ENCODE measurements at regions of chr14 and their contacts with region 1.

Region 1: GRCh38 chr14:50714450-50715073 is 46.5 kb upstream of the SAV1 start:
- DNase-seq: peak; percentile 60
- H3K4me3 ChIP-seq: no peak overlapping the region
- H3K27ac ChIP-seq: no peak overlapping the region
- H3K4me1 ChIP-seq: no peaks in the 10 kb centered on the region
- H3K27me3 ChIP-seq: no peaks in the 10 kb centered on the region
- CTCF ChIP-seq: peak; percentile 38 to 63
- POLR2A ChIP-seq: no peak

Region 2: DNA sequence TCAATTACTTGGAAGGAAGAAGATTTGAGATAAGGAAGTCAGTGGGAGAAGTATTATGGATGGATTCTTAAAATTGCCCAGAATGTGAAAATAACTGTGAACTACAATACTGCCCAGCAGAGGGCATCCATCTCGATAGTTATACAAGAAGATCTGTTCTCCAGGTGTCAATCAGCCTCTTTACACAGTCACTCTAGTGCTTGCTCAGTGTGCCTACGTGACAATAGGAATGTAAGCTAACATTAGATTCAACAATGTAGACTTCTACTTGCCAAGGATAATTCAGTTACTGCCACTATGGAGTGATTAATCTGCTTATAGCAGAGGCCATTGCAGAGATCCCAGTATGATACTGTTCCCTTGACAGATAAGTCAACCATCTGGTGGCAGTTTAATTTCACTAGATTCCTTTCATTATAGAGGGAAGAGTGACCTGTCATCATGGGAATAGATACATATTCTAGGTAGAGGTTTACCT is 171.6 kb before region 1 on chr14:
- CTCF ChIA-PET with region 1: interaction called, 14 read pairs
- POLR2A ChIA-PET with region 1: no interaction called
- dilution Hi-C with region 1: no loop called
- intact Hi-C with region 1: loop called (anchors 1 kb)
- DNase-seq: peak; percentile 68
- H3K4me3 ChIP-seq: no peak overlapping the region
- H3K27ac ChIP-seq: no peak overlapping the region
- H3K4me1 ChIP-seq: no peaks in the 10 kb centered on the region
- H3K27me3 ChIP-seq: peaks cover 0 to 11% of the 10 kb centered on the region in 2 experiments
- CTCF ChIP-seq: peak; percentile 24 to 47
- POLR2A ChIP-seq: no peak

Region 3: DNA sequence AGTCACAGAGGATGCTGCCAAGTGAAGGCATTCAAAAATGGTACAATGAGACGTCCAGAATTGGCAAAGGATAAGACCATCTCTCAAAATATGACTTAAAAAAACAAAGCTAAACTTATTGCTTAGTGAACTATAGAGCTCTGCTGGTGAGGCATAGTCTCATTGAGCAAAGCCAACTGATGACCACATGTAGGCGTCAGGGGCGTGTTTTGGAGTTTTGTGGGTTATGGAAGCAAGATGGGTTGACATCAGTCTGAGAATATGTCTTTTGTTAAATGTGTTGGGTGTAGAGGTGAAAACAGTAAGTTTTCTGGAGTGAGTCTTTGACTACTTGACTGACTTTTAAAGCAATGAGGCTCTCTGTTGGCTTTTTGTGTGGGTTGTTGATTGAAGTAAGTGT is 107.4 kb before region 1 on chr14:
- CTCF ChIA-PET with region 1: interaction called, 76 read pairs
- POLR2A ChIA-PET with region 1: no interaction called
- dilution Hi-C with region 1: no loop called
- intact Hi-C with region 1: no loop called
- DNase-seq: no peak
- H3K4me3 ChIP-seq: no peak overlapping the region
- H3K27ac ChIP-seq: no peak overlapping the region
- H3K4me1 ChIP-seq: peaks cover 16% of the 10 kb centered on the region
- H3K27me3 ChIP-seq: no peaks in the 10 kb centered on the region
- CTCF ChIP-seq: no peak
- POLR2A ChIP-seq: no peak

Region 4: DNA sequence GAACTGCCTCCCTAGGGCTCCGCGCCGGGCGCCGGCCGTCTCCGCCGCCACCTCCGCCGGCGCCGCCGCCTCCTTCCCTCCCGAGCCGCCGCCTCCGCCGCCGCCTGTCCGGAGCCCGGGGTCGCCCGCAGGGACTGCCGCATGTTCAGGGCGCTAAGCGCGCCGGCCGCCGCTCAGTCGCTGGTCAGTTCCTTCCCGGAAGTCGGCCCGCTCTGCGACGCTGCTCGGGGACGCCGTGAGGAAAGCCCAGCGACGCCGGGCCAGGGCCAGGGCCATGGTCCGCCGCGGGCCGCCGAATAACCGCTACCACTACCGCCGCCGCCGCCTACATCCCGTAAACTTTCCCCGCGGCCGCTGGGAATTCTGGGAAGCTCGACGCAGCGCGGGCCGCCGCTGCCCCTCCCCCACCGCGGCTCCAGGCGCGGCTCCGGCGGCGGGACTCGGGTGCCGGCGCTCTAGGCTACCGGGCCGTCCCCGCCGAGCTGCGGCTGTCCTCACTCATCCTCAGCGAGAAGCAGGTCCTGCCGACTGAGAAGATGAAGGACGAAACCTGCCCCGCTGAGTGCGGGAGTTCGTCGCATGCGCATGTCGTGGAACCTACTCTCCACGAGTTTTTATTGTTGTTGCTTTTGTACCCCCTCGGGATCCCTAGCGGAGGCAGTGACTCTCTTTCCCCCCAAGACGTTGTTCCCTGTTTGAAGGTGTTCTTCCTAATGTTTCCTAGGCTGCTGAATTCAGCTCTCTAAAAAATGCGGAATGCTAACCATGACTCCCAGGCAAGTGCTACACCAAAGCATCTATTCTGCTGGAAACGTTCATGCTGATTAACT is 46.4 kb before region 1 on chr14 and contains the start of gene SAV1:
- CTCF ChIA-PET with region 1: interaction called, 24 read pairs
- POLR2A ChIA-PET with region 1: interaction called, 4 read pairs
- dilution Hi-C with region 1: no loop called
- intact Hi-C with region 1: loop called (anchors 2 kb)
- DNase-seq: peak; percentile 82
- H3K4me3 ChIP-seq: peak within 1 kb of the TSS; percentile 70 to 85 (median 81)
- H3K27ac ChIP-seq: peak within 1 kb of the TSS; percentile 81
- H3K4me1 ChIP-seq: peaks cover 23% of the 10 kb centered on the region
- H3K27me3 ChIP-seq: no peaks in the 10 kb centered on the region
- CTCF ChIP-seq: no peak
- POLR2A ChIP-seq: peak; percentile 99
- total RNA-seq, gene SAV1: 27.8 and 31.0 TPM in 2 replicates

Region 5: GRCh38 chr14:50697659-50698290 is 16.8 kb before region 1 on chr14:
- CTCF ChIA-PET with region 1: interaction called, 13 read pairs
- POLR2A ChIA-PET with region 1: no interaction called
- dilution Hi-C with region 1: no loop called
- intact Hi-C with region 1: no loop called
- DNase-seq: no peak
- H3K4me3 ChIP-seq: no peak overlapping the region
- H3K27ac ChIP-seq: no peak overlapping the region
- H3K4me1 ChIP-seq: no peaks in the 10 kb centered on the region
- H3K27me3 ChIP-seq: peaks cover 2% of the 10 kb centered on the region in 2 experiments
- CTCF ChIP-seq: no peak
- POLR2A ChIP-seq: no peak

Region 6: GRCh38 chr14:50773632-50774541 is 59.3 kb after region 1 on chr14:
- CTCF ChIA-PET with region 1: interaction called, 15 read pairs
- POLR2A ChIA-PET with region 1: no interaction called
- dilution Hi-C with region 1: no loop called
- intact Hi-C with region 1: no loop called
- DNase-seq: peak; percentile 60
- H3K4me3 ChIP-seq: no peak overlapping the region
- H3K27ac ChIP-seq: peak overlapping the region; percentile 71
- H3K4me1 ChIP-seq: peaks cover 33% of the 10 kb centered on the region
- H3K27me3 ChIP-seq: no peaks in the 10 kb centered on the region
- CTCF ChIP-seq: peak; percentile 83 to 84
- POLR2A ChIP-seq: no peak